ENCODE measurements at regions of chr4 and their contacts with region 1.

Region 1: GRCh38 chr4:82373816-82374625 is at the start of gene HNRNPD:
- DNase-seq: peak; percentile 76 to 99 (median 91)
- ATAC-seq: peak; percentile 83
- H3K4me3 ChIP-seq: peak within 1 kb of the TSS; percentile 94 to 98
- H3K4me3 Mint-ChIP-seq: peak within 1 kb of the TSS; percentile 100
- H3K27ac ChIP-seq: peak within 1 kb of the TSS; percentile 87 to 99
- H3K27ac Mint-ChIP-seq: peak within 1 kb of the TSS; percentile 100
- H3K4me1 ChIP-seq: peaks cover 34% of the 10 kb centered on the region
- H3K4me1 Mint-ChIP-seq: peaks cover 51% of the 10 kb centered on the region
- H3K27me3 ChIP-seq: no peaks in the 10 kb centered on the region
- H3K27me3 Mint-ChIP-seq: no peaks in the 10 kb centered on the region
- CTCF ChIP-seq: no peak
- total RNA-seq, gene HNRNPD: 245 to 248 TPM

Region 2: DNA sequence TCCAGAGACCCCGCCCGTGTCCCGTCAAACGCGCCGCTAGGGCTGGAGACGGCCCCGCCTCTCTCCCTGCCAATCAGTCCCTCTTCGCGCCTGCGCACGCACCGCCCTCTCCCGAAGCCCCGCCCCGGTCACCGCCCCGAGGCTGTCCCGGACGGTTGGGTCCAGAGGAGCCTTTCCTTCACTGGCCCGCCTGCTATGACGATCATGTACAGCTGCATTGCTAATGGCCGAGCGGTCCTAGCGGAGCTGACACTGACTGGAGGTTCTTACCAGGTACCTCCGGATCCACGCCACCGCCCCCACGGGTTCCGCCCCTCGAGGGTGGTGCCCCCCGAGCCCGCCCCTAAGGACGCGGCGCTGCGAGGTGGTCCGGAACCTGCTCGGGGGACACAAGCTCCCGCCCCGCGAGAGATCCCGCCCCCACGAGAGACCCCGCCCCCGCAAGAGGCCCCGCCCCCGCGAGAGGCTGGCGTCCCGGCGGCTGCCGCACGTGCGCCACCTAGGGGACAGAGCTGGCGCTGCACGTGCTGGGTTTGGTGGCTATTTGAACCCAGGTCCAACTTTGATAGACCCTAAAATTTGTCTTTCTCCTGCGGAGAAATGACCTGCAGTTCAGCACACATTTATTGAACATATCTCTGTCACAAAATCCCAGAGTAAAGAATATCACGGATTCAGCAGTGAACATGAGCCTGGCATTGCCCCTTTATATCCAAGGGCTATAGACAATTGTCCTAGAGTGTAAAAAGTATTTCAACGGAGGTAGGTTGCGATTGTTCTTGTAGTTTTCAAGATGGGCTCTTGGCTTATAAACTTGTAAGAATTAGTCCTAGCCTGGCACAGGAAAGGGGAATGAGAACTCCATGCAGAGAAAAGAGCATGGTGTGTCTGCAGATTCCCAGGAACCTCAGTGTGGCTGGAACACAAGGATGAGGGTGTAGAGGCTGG is 88.9 kb before region 1 on chr4:
- CTCF ChIA-PET with region 1: interaction called, 3 read pairs
- POLR2A ChIA-PET with region 1: interaction called, 4 read pairs
- intact Hi-C with region 1: loop called (anchors 1 to 2 kb)
- DNase-seq: peak; percentile 98 to 99 (median 99)
- ATAC-seq: peak; percentile 91
- H3K4me3 ChIP-seq: peak overlapping the region; percentile 57 to 63
- H3K4me3 Mint-ChIP-seq: peak overlapping the region; percentile 88
- H3K27ac ChIP-seq: peak overlapping the region; percentile 43 to 68
- H3K27ac Mint-ChIP-seq: peak overlapping the region; percentile 41
- H3K4me1 ChIP-seq: peaks cover 12% of the 10 kb centered on the region
- H3K4me1 Mint-ChIP-seq: peaks cover 15% of the 10 kb centered on the region
- H3K27me3 ChIP-seq: peaks cover 0 to 5% of the 10 kb centered on the region in 2 experiments
- H3K27me3 Mint-ChIP-seq: no peaks in the 10 kb centered on the region
- CTCF ChIP-seq: peak; percentile 97

Region 3: GRCh38 chr4:82428969-82429727 is 55.1 kb after region 1 on chr4:
- CTCF ChIA-PET with region 1: interaction called, 4 read pairs
- POLR2A ChIA-PET with region 1: interaction called, 95 read pairs
- intact Hi-C with region 1: loop called (anchors 1 kb)
- DNase-seq: peak; percentile 87 to 96 (median 93)
- ATAC-seq: peak; percentile 62
- H3K4me3 ChIP-seq: peak overlapping the region; percentile 91 to 99
- H3K4me3 Mint-ChIP-seq: peak overlapping the region; percentile 100
- H3K27ac ChIP-seq: peak overlapping the region; percentile 99 to 100
- H3K27ac Mint-ChIP-seq: peak overlapping the region; percentile 99
- H3K4me1 ChIP-seq: peaks cover 40% of the 10 kb centered on the region
- H3K4me1 Mint-ChIP-seq: peaks cover 72% of the 10 kb centered on the region
- H3K27me3 ChIP-seq: no peaks in the 10 kb centered on the region
- H3K27me3 Mint-ChIP-seq: no peaks in the 10 kb centered on the region
- CTCF ChIP-seq: peak; percentile 90

Region 4: GRCh38 chr4:82890901-82891706 is 517.1 kb after region 1 on chr4 and contains the start of gene SEC31A:
- CTCF ChIA-PET with region 1: no interaction called
- POLR2A ChIA-PET with region 1: no interaction called
- intact Hi-C with region 1: loop called (anchors 1 to 5 kb)
- DNase-seq: peak; percentile 93 to 99 (median 97)
- ATAC-seq: peak; percentile 93
- H3K4me3 ChIP-seq: peak within 1 kb of the TSS; percentile 87 to 88
- H3K4me3 Mint-ChIP-seq: peak within 1 kb of the TSS; percentile 89
- H3K27ac ChIP-seq: peak within 1 kb of the TSS; percentile 96
- H3K27ac Mint-ChIP-seq: peak within 1 kb of the TSS; percentile 98
- H3K4me1 ChIP-seq: peaks cover 22% of the 10 kb centered on the region
- H3K4me1 Mint-ChIP-seq: peaks cover 45% of the 10 kb centered on the region
- H3K27me3 ChIP-seq: no peaks in the 10 kb centered on the region
- H3K27me3 Mint-ChIP-seq: no peaks in the 10 kb centered on the region
- CTCF ChIP-seq: no peak
- total RNA-seq, gene SEC31A: 115 to 117 TPM

Region 5: GRCh38 chr4:83012687-83013419 is 638.8 kb after region 1 on chr4:
- CTCF ChIA-PET with region 1: no interaction called
- POLR2A ChIA-PET with region 1: no interaction called
- intact Hi-C with region 1: loop called (anchors 1 to 5 kb)
- DNase-seq: peak; percentile 94 to 98 (median 96)
- ATAC-seq: peak; percentile 88
- H3K4me3 ChIP-seq: peak overlapping the region; percentile 54 to 69
- H3K4me3 Mint-ChIP-seq: peak overlapping the region; percentile 90
- H3K27ac ChIP-seq: peak overlapping the region; percentile 56 to 95
- H3K27ac Mint-ChIP-seq: peak overlapping the region; percentile 91
- H3K4me1 ChIP-seq: peaks cover 31% of the 10 kb centered on the region
- H3K4me1 Mint-ChIP-seq: peaks cover 40% of the 10 kb centered on the region
- H3K27me3 ChIP-seq: no peaks in the 10 kb centered on the region
- H3K27me3 Mint-ChIP-seq: no peaks in the 10 kb centered on the region
- CTCF ChIP-seq: peak; percentile 65

Region 6: GRCh38 chr4:83217721-83218522 is 843.9 kb after region 1 on chr4:
- CTCF ChIA-PET with region 1: no interaction called
- POLR2A ChIA-PET with region 1: no interaction called
- intact Hi-C with region 1: loop called in 1 of 2 experiments (anchors 5 kb)
- DNase-seq: peak; percentile 35 to 94 (median 67)
- ATAC-seq: peak; percentile 93
- H3K4me3 ChIP-seq: no peak overlapping the region
- H3K4me3 Mint-ChIP-seq: peak overlapping the region; percentile 55
- H3K27ac ChIP-seq: peak overlapping the region; percentile 68 to 81
- H3K27ac Mint-ChIP-seq: peak overlapping the region; percentile 89
- H3K4me1 ChIP-seq: peaks cover 66% of the 10 kb centered on the region
- H3K4me1 Mint-ChIP-seq: peaks cover 74% of the 10 kb centered on the region
- H3K27me3 ChIP-seq: no peaks in the 10 kb centered on the region
- H3K27me3 Mint-ChIP-seq: no peaks in the 10 kb centered on the region
- CTCF ChIP-seq: no peak